Right ventricle myocardium inferior (tissue), 1 donor: ENCODE measurements at regions of chr6 and their contacts with region 1.

Region 1: GRCh38 chr6:149565527-149566409 is at the start of gene GINM1:
- DNase-seq: peak; percentile 96
- ATAC-seq: peak; percentile 98
- total RNA-seq, gene GINM1: 51.3 TPM

Region 2: DNA sequence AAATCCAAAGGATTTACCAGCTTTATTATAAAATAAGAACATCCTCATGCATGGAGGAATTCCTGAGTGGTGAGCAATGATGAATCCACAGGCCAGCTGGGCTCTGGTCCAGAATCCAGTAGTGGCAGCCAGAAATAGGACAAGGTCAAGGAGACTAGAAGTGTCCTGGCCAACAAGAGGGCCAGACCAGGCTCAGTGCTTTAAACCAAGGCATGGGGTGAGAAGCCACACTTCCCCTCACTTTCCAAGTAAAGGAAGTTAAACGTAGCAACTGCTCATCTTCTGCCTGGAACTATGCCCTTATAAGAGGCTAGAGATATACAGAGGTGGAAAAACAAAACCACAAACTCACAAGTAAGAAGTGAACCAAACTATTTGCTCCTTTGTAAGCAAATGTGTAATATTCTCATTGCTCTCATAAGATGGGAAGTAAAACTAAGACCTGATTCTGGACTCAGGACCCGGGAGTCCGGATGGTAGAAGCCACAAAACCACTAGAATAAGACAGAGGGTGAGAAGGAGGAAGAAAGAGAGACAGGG is 565.8 kb before region 1 on chr6:
- intact Hi-C with region 1: no loop called
- DNase-seq: peak; percentile 81
- ATAC-seq: peak; percentile 91

Region 3: GRCh38 chr6:149545754-149546528 is 19.8 kb before region 1 on chr6 and contains the start of gene PPIL4:
- intact Hi-C with region 1: loop called (anchors 2 kb)
- DNase-seq: peak; percentile 99
- ATAC-seq: peak; percentile 98
- total RNA-seq, gene PPIL4: 15.3 TPM

Region 4: GRCh38 chr6:149648148-149649145 is 82.7 kb after region 1 on chr6 and contains the start of gene KATNA1:
- intact Hi-C with region 1: loop called (anchors 5 kb)
- DNase-seq: peak; percentile 93
- ATAC-seq: peak; percentile 98
- total RNA-seq, gene KATNA1: 11.4 TPM

Region 5: GRCh38 chr6:149717588-149718458 is 152.1 kb after region 1 on chr6 and contains the start of gene LATS1:
- intact Hi-C with region 1: loop called (anchors 10 kb)
- DNase-seq: peak; percentile 96
- ATAC-seq: peak; percentile 94
- total RNA-seq, gene LATS1: 10.3 TPM

Region 6: DNA sequence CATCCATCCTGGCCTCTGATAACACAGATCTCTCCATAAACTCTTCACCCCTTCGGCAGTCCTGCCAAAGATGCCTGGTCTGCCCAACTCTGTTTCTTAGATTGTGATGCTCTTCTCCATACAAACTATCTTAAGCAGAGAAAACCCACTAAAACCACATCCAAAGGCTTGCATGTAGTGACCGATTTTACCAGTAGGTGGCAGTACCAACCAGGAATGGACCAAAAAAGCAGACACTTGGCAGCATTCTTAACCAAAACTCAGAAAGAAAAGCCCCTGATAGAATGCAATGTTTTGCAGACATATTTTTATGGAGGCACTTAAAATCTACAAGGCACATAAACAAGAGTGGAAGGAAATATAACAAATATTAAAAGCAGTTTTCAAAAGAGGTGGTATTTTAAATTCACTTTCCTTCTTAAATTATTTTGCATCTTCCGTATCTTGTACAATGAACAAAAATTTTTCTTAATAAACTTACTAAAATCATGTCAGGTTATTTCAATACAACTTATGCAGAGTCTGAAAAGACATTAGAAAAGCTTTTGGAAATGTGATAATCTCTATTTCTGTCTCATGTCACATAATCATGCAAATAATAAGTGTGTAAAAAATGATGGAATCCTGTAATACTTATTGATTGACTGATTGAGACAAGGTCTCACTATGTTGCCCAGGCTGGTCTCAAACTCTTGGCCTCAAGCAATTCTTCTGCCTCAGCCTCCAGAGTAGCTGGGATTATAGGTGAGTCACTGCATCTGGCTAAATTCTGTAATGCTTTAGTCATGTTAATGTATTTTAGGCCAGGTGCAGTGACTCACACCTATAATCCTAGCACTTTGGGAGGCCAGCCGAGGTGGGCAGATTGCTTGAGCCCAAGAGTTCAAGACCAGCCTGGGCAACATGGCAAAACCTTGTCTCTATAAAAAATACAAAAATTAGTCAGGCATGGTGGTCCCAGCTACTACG is 269.0 kb after region 1 on chr6:
- intact Hi-C with region 1: no loop called
- DNase-seq: no peak
- ATAC-seq: no peak

Region 7: DNA sequence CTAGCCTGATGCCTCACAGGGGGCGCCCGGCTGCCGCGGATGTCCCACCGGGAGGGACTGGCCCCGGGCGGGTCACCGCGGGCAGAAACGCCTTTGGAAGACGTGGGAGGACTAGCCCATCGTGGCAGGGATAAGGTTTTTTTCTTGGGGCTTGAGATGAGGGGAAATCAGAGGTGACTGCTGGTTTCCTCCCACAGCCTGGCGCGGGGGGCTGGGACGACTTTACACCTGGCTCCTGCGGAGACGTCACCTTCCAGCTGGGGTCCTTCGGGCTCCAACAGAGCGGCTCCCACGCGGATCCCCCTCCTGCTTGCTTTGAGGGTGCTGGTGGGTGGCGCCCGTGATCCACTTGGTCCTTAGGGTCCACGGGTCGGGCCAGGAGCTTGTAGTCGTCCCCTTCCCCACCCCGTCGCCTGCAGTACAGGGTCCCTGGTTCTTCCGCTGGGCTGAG is 491.8 kb after region 1 on chr6:
- intact Hi-C with region 1: no loop called
- DNase-seq: peak; percentile 55
- ATAC-seq: no peak